ENCODE measurements at regions of chr17 and their contacts with region 1.

Region 1: DNA sequence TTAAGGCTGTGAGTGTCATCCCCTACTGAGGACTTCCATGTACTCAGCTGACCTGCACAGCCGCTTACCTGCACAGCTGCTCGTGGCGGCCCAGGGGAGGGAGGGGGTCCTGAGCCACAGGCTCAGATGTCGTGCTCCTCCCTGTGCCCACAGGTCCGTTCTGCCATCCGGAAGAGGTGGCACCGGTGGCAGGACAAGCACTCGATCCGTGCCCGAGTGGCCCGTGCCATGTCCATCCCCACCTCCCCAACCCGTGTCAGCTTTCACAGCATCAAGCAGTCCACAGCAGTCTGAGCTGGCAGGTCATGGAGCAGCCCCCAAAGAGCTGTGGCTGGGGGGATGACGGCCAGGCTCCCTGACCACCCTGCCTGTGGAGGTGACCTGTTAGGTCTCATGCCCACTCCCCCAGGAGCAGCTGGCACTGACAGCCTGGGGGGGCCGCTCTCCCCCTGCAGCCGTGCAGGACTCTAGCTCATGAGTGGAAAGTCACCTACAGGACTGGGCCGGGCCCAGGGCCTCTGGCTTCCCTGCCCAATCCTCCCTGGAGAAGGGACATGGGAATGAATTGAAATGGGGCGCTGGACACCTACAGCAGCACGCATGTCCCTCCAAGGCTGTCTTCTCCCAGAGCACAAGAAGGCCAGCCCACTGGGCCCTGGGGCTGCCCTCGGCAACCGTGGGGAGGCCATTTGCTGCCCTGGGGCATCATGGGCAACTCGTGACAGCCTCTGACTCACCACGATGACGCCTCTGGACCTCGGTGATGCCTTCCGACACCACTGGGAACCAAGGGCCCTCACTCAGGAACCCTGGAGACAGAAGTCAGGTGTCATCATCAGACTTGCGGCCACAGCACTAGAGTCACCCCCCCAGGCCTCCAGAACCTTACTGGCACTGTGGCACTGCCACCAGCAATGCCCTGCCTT is 9.9 kb upstream of the SPPL2C start:
- DNase-seq: no peak
- ATAC-seq: peak in 1 of 8 donors; percentile 5
- H3K4me3 ChIP-seq: no peak overlapping the region
- H3K27ac ChIP-seq: no peak overlapping the region
- H3K4me1 ChIP-seq: no peaks in the 10 kb centered on the region
- H3K27me3 ChIP-seq: peaks cover 0 to 73% (median 34%) of the 10 kb centered on the region in 7 donors
- CTCF ChIP-seq: no peak

Region 2: DNA sequence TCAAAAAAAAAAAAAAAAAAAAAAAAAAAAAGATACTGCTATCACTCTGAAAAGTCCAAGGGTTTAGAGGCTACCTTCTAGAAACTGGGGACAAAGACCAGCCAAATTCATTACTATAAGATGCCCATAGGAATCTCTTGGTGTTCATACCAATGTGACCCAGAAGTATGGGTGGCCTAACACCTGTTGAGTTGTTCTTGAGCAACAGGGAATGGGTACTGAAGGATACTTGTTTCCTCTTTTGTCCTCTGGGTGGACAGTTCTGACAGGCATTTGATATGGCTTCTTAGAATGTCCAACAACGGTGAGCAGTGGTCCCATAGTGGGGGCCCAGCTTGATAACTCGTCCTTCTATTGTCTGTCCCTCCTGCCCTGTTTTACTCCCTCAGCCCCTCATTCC is 202.8 kb before region 1 on chr17:
- intact Hi-C with region 1: loop called in 1 of 10 experiments (anchors 5 kb)
- DNase-seq: no peak
- ATAC-seq: no peak
- H3K4me3 ChIP-seq: no peak overlapping the region
- H3K27ac ChIP-seq: no peak overlapping the region
- H3K4me1 ChIP-seq: no peaks in the 10 kb centered on the region
- H3K27me3 ChIP-seq: no peaks in the 10 kb centered on the region
- CTCF ChIP-seq: no peak

Region 3: DNA sequence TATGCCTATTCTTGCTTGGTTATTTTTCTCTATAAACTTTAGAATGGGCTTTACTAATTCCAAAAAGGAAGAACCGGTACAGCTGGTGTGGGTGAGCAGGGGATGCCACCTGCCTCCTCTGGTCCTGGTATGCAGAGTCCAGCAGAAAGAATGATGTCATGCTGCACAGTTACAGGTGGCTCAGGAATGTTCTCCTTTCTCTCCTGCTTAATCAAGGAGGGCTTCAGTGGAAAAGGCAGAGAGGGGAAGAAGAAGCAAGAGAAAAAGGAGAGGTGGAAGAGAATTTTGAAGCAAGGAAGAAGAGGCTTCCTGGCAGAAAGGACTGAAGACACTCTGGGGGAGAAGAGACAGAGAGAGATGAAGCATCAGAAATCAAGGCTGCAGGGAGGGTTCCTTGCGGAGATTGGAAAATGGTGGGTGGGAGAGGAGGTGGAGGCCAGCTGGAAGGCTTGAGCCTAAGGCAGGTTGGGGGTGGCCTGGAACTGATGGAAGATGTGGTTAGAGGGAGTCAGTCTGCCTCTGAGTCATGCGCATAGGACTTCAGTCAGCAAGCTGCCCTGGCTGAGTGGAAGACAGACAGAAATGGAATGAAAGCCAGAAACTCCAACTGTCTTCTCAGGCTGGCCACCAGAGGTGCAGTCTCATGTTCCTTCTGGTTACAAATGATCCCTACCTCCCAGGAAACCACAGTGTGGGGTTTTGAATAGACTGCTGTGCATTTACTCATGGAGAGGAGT is 115.2 kb before region 1 on chr17:
- intact Hi-C with region 1: loop called in 2 of 10 experiments (anchors 10 kb)
- DNase-seq: no peak
- ATAC-seq: peak in 4 of 8 donors; percentile 29 to 84 (median 57)
- H3K4me3 ChIP-seq: no peak overlapping the region
- H3K27ac ChIP-seq: no peak overlapping the region
- H3K4me1 ChIP-seq: no peaks in the 10 kb centered on the region
- H3K27me3 ChIP-seq: peaks cover 0 to 74% (median 38%) of the 10 kb centered on the region in 7 donors
- CTCF ChIP-seq: peak in 5 of 9 donors; percentile 22 to 45 (median 32)

Region 4: GRCh38 chr17:45775576-45776011 is 59.1 kb before region 1 on chr17:
- intact Hi-C with region 1: no loop called
- DNase-seq: peak; percentile 31 to 60
- ATAC-seq: peak; percentile 53 to 84 (median 70)
- H3K4me3 ChIP-seq: no peak overlapping the region
- H3K27ac ChIP-seq: no peak overlapping the region
- H3K4me1 ChIP-seq: no peaks in the 10 kb centered on the region
- H3K27me3 ChIP-seq: peaks cover 0 to 70% (median 36%) of the 10 kb centered on the region in 7 donors
- CTCF ChIP-seq: no peak